BJ (cell line): ENCODE measurements at regions of chr3 and their contacts with region 1.

Region 1: GRCh38 chr3:13104510-13104909 is 31.3 kb upstream of the IQSEC1 start:
- DNase-seq: no peak
- H3K4me3 ChIP-seq: no peak overlapping the region
- H3K27me3 ChIP-seq: peaks cover 6% of the 10 kb centered on the region; the same call in 1 of the 2 replicates
- CTCF ChIP-seq: no peak

Region 2: DNA sequence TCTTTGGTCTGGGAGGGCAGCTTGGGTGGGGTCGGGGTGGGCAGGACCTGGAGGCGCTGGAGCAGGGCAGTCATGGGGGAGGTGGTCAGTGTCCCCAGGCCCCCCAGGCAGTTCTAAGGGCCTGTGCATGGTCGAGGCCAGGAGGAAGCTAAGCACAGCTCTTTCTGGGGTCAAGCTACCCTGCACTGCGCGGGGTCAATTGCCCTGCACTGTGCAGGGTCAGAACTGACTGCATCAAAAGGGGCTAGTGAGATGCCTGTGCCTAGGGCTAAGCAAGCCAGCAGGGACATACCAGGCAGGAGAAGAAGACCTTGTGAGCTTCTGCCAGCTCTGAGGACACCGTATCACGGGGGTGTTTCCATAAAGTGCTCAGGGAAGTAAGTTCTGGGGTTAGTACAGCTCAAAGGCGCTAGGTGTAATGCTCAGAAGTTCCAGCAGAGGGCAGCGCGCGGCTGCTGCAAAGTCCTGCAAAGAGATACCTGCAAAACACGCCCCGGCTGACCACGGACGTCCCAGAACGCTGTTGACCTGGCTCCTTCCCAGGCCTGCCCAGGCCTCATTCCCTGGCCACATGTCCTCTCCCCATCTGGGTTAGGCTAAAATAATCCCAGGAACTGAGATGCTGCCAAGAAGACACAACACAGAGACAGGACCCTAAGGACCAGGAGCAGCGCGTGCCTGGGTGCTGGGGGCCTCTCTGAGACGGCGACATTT is 12.5 kb before region 1 on chr3:
- CTCF ChIA-PET with region 1: interaction called, 30 read pairs
- POLR2A ChIA-PET with region 1: no interaction called
- DNase-seq: peak; percentile 8
- H3K4me3 ChIP-seq: no peak overlapping the region
- H3K27me3 ChIP-seq: peaks cover 4% of the 10 kb centered on the region; the same call in 1 of the 2 replicates
- CTCF ChIP-seq: peak; percentile 96